SK-N-SH (cell line): ENCODE measurements at regions of chr9 and their contacts with region 1.

Region 1: DNA sequence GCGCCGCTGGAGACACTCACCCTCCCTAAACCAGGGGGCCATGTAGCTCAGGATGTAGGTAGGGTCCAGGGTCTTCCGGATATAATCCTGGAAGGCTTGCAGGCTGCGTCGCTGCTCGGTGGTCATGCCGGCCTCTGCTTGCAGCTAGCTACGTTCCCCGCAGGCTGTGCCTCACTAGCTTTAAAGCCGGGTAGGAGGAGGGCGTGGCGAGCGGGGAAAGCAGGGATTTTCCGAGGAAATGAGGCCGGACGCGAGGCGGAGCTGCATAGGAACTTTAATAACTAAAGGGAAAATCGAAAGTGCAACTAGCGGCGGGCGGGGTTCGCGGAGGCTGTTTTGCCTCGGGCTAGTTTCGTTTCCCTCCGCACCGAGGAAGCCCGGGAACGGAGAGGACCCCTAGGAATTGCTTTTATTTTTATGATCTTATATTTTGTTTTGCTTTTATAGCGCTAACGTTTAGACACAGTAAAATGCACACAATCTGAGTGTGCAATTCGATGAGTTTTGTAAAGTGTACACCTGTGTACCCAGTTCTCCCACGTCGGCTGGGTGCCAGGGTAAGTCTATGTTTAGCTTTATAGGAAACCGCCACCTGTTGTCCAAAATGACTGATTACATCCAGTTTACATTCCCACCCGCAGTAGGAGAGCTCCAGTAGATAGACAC is at the start of gene RIGI:
- DNase-seq: peak; percentile 64
- H3K4me3 ChIP-seq: peak within 1 kb of the TSS; percentile 70 to 79
- H3K27ac ChIP-seq: peak within 1 kb of the TSS; percentile 72 to 86
- H3K4me1 ChIP-seq: peaks cover 0 to 7% of the 10 kb centered on the region in 2 experiments; a peak in 3 of 4 replicates
- H3K27me3 ChIP-seq: no peaks in the 10 kb centered on the region
- CTCF ChIP-seq: peak; percentile 65
- EP300 ChIP-seq: no peak
- RAD21 ChIP-seq: peak; percentile 59
- polyA plus RNA-seq, gene RIGI: 1.5 and 2.5 TPM in 2 replicates

Region 2: GRCh38 chr9:32543047-32543446 is 16.9 kb after region 1 on chr9:
- CTCF ChIA-PET with region 1: interaction called, 14 read pairs
- POLR2A ChIA-PET with region 1: no interaction called
- DNase-seq: no peak
- H3K4me3 ChIP-seq: no peak overlapping the region
- H3K27ac ChIP-seq: no peak overlapping the region
- H3K4me1 ChIP-seq: no peaks in the 10 kb centered on the region; a peak in 1 of 4 replicates
- H3K27me3 ChIP-seq: no peaks in the 10 kb centered on the region
- CTCF ChIP-seq: no peak
- EP300 ChIP-seq: no peak
- RAD21 ChIP-seq: no peak